Activated CD4-positive, alpha-beta memory T cell treated with anti-CD3 and anti-CD28 coated beads for 36 hours (primary cell): ENCODE measurements at regions of chr12 and their contacts with region 1.

Region 1: GRCh38 chr12:92529944-92530343 is 172.8 kb upstream of the PLEKHG7 start:
- DNase-seq: no peak
- H3K4me3 Mint-ChIP-seq: no peak overlapping the region
- H3K27ac Mint-ChIP-seq: no peak overlapping the region
- H3K4me1 Mint-ChIP-seq: peaks cover 16% of the 10 kb centered on the region
- H3K27me3 Mint-ChIP-seq: no peaks in the 10 kb centered on the region

Region 2: GRCh38 chr12:92516277-92516600 is 13.7 kb before region 1 on chr12:
- CTCF ChIA-PET with region 1: no interaction called
- POLR2A ChIA-PET with region 1: interaction called, 4 read pairs
- intact Hi-C with region 1: loop called (anchors 2 kb)
- DNase-seq: peak; percentile 55
- H3K4me3 Mint-ChIP-seq: peak overlapping the region; percentile 17
- H3K27ac Mint-ChIP-seq: peak overlapping the region; percentile 84
- H3K4me1 Mint-ChIP-seq: peaks cover 28% of the 10 kb centered on the region
- H3K27me3 Mint-ChIP-seq: no peaks in the 10 kb centered on the region